Adrenal gland (tissue), 19 donors: ENCODE measurements at regions of chr13 and their contacts with region 1.

Region 1: GRCh38 chr13:25232937-25233515 is 54.3 kb downstream of the MTMR6 start:
- DNase-seq: peak in 1 of 7 donors; percentile 8
- H3K4me3 ChIP-seq: no peak overlapping the region
- H3K27ac ChIP-seq: no peak overlapping the region
- H3K4me1 ChIP-seq: peaks cover 3 to 4% of the 10 kb centered on the region in 2 donors
- H3K27me3 ChIP-seq: no peaks in the 10 kb centered on the region
- CTCF ChIP-seq: peak; percentile 53 to 76 (median 68)
- POLR2A ChIP-seq: no peak

Region 2: GRCh38 chr13:24982333-24982999 is 250.6 kb before region 1 on chr13:
- intact Hi-C with region 1: no loop called
- DNase-seq: no peak
- H3K4me3 ChIP-seq: no peak overlapping the region
- H3K27ac ChIP-seq: no peak overlapping the region
- H3K4me1 ChIP-seq: no peaks in the 10 kb centered on the region
- H3K27me3 ChIP-seq: peaks cover 6% of the 10 kb centered on the region
- CTCF ChIP-seq: no peak
- POLR2A ChIP-seq: no peak

Region 3: DNA sequence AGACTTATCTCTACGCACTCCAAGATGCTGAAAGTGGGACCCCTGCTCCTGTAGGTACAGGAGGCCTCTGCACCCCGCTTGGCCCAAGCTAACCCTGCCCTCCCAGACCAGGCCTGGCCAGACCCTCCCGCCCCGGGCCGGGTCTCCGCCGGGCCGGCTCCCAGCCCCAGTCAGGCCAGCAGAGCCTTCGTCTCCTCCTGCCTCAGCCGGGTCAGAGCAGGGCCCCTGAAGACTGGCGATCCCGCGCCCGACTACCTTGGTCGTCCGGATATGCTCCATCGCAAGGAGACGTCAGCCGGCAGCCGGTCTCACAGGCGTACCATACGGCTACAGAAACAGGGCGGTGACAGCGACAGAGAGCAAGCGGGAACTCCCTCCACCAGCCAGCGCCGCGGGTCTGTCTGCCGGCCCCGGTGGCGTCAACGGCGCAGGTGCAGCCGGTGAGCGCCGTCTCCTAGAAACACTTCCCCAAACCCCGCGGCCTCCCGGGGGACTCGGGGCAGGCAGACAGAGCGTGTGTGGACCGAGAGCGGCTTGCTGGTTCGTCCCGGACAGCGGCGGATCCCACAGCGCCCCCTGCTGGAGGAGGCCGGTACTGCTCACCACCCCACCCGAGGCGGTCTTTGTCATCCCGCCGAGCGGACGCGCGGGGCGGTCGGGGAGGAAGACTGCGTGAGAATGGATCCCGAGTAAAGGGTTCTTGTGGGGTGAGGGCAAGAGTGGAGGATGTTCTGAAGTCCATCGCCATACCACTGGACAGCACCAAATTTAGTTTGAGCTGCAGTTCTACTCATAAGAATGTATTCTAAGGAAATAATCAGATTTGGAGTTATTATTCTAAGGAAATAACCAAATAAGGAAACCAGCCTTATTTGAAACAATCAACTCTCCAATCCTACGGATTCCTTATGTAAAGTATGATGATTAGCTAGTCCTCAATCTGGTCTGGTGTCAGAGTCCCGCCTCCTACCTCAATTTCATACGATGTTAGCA is 54.2 kb after region 1 on chr13 and contains the start of gene MTMR6:
- intact Hi-C with region 1: loop called in 1 of 2 experiments (anchors 10 kb)
- DNase-seq: peak; percentile 89 to 97 (median 92)
- H3K4me3 ChIP-seq: peak within 1 kb of the TSS; percentile 76 to 91 (median 86)
- H3K27ac ChIP-seq: peak within 1 kb of the TSS; percentile 89 to 98 (median 94)
- H3K4me1 ChIP-seq: peaks cover 23 to 40% of the 10 kb centered on the region in 2 donors
- H3K27me3 ChIP-seq: no peaks in the 10 kb centered on the region
- CTCF ChIP-seq: peak; percentile 98 to 100 (median 100)
- POLR2A ChIP-seq: peak; percentile 80 to 84
- total RNA-seq, gene MTMR6: 21.7 to 50.8 (median 37.3) TPM

Region 4: GRCh38 chr13:25375727-25376358 is 142.8 kb after region 1 on chr13:
- intact Hi-C with region 1: loop called in 1 of 2 experiments (anchors 5 kb)
- DNase-seq: peak in 5 of 7 donors; percentile 32 to 56 (median 47)
- H3K4me3 ChIP-seq: no peak overlapping the region
- H3K27ac ChIP-seq: no peak overlapping the region
- H3K4me1 ChIP-seq: peaks cover 0 to 7% of the 10 kb centered on the region in 2 donors
- H3K27me3 ChIP-seq: peaks cover 7% of the 10 kb centered on the region
- CTCF ChIP-seq: peak; percentile 57 to 73 (median 70)
- POLR2A ChIP-seq: no peak

Region 5: GRCh38 chr13:25602176-25602575 is 369.1 kb after region 1 on chr13:
- intact Hi-C with region 1: no loop called
- DNase-seq: no peak
- H3K4me3 ChIP-seq: no peak overlapping the region
- H3K27ac ChIP-seq: no peak overlapping the region
- H3K4me1 ChIP-seq: no peaks in the 10 kb centered on the region
- H3K27me3 ChIP-seq: no peaks in the 10 kb centered on the region
- CTCF ChIP-seq: no peak
- POLR2A ChIP-seq: no peak